IMR-90 (cell line): ENCODE measurements at regions of chr2 and their contacts with region 1.

Region 1: GRCh38 chr2:31606509-31606908 is 25.8 kb upstream of the SRD5A2 start:
- DNase-seq: no peak
- ATAC-seq: no peak
- H3K4me3 ChIP-seq: no peak overlapping the region
- H3K27ac ChIP-seq: no peak overlapping the region
- H3K4me1 ChIP-seq: no peaks in the 10 kb centered on the region
- H3K27me3 ChIP-seq: no peaks in the 10 kb centered on the region
- CTCF ChIP-seq: no peak
- POLR2A ChIP-seq: no peak
- RAD21 ChIP-seq: no peak

Region 2: GRCh38 chr2:31644551-31644950 is 38.0 kb after region 1 on chr2:
- CTCF ChIA-PET with region 1: no interaction called
- POLR2A ChIA-PET with region 1: no interaction called
- dilution Hi-C with region 1: no loop called
- in situ Hi-C with region 1: no loop called
- intact Hi-C with region 1: loop called (anchors 5 kb)
- DNase-seq: no peak
- ATAC-seq: no peak
- H3K4me3 ChIP-seq: no peak overlapping the region
- H3K27ac ChIP-seq: no peak overlapping the region
- H3K4me1 ChIP-seq: no peaks in the 10 kb centered on the region
- H3K27me3 ChIP-seq: no peaks in the 10 kb centered on the region
- CTCF ChIP-seq: no peak
- POLR2A ChIP-seq: no peak
- RAD21 ChIP-seq: no peak

Region 3: DNA sequence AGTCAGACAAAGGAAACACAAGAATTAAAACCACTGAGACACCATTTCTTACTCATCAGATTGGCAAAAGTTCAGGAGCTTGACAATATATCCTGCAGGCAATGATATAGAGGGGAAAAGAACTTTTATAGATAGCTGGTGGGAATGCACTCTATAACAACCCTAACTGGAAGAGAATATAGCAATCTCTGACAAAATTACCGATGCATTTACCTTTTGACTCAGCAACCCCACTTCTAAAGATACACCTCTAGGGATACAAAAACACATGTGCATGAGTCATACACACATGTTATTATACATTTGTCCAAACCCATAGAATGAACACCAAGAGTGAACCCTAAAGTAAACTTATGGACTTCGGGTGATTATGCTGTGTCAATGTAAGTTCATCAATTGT is 53.7 kb after region 1 on chr2:
- CTCF ChIA-PET with region 1: no interaction called
- POLR2A ChIA-PET with region 1: no interaction called
- dilution Hi-C with region 1: no loop called
- in situ Hi-C with region 1: no loop called
- intact Hi-C with region 1: loop called (anchors 10 kb)
- DNase-seq: no peak
- ATAC-seq: no peak
- H3K4me3 ChIP-seq: no peak overlapping the region
- H3K27ac ChIP-seq: no peak overlapping the region
- H3K4me1 ChIP-seq: no peaks in the 10 kb centered on the region
- H3K27me3 ChIP-seq: no peaks in the 10 kb centered on the region
- CTCF ChIP-seq: no peak
- POLR2A ChIP-seq: no peak
- RAD21 ChIP-seq: no peak